Activated CD4-positive, alpha-beta T cell treated with anti-CD3 and anti-CD28 coated beads, Interleukin-2, amount 10 ng/mL, durations not matched to agents 7 days and 5 days (primary cell): ENCODE measurements at regions of chr16 and their contacts with region 1.

Region 1: GRCh38 chr16:87636072-87636684 is 33.9 kb downstream of the JPH3 start:
- DNase-seq: peak; percentile 78
- H3K4me3 Mint-ChIP-seq: peak overlapping the region; percentile 19
- H3K27ac Mint-ChIP-seq: no peak overlapping the region
- H3K4me1 Mint-ChIP-seq: peaks cover 11% of the 10 kb centered on the region
- H3K27me3 Mint-ChIP-seq: peaks cover 11% of the 10 kb centered on the region

Region 2: GRCh38 chr16:87416826-87417527 is 219.2 kb before region 1 on chr16:
- CTCF ChIA-PET with region 1: interaction called, 16 read pairs
- POLR2A ChIA-PET with region 1: no interaction called
- DNase-seq: peak; percentile 49
- H3K4me3 Mint-ChIP-seq: no peak overlapping the region
- H3K27ac Mint-ChIP-seq: no peak overlapping the region
- H3K4me1 Mint-ChIP-seq: no peaks in the 10 kb centered on the region
- H3K27me3 Mint-ChIP-seq: no peaks in the 10 kb centered on the region

Region 3: GRCh38 chr16:87619360-87620200 is 16.6 kb before region 1 on chr16:
- CTCF ChIA-PET with region 1: no interaction called
- POLR2A ChIA-PET with region 1: no interaction called
- DNase-seq: no peak
- H3K4me3 Mint-ChIP-seq: no peak overlapping the region
- H3K27ac Mint-ChIP-seq: no peak overlapping the region
- H3K4me1 Mint-ChIP-seq: no peaks in the 10 kb centered on the region
- H3K27me3 Mint-ChIP-seq: no peaks in the 10 kb centered on the region

Region 4: GRCh38 chr16:87647431-87648185 is 11.4 kb after region 1 on chr16:
- CTCF ChIA-PET with region 1: interaction called, 11 read pairs
- POLR2A ChIA-PET with region 1: no interaction called
- DNase-seq: no peak
- H3K4me3 Mint-ChIP-seq: no peak overlapping the region
- H3K27ac Mint-ChIP-seq: no peak overlapping the region
- H3K4me1 Mint-ChIP-seq: no peaks in the 10 kb centered on the region
- H3K27me3 Mint-ChIP-seq: peaks cover 4% of the 10 kb centered on the region